ENCODE measurements at regions of chr5 and their contacts with region 1.

Region 1: GRCh38 chr5:96807075-96807654 is 580 bp downstream of the ERAP1 start:
- DNase-seq: peak; percentile 77
- H3K4me3 ChIP-seq: peak overlapping the region; percentile 92 to 93
- H3K27ac ChIP-seq: peak overlapping the region; percentile 99
- H3K4me1 ChIP-seq: peaks cover 8% of the 10 kb centered on the region
- H3K27me3 ChIP-seq: no peaks in the 10 kb centered on the region
- CTCF ChIP-seq: no peak
- POLR2A ChIP-seq: no peak

Region 2: GRCh38 chr5:96687812-96688453 is 119.2 kb before region 1 on chr5:
- intact Hi-C with region 1: no loop called
- DNase-seq: no peak
- H3K4me3 ChIP-seq: no peak overlapping the region
- H3K27ac ChIP-seq: no peak overlapping the region
- H3K4me1 ChIP-seq: no peaks in the 10 kb centered on the region
- H3K27me3 ChIP-seq: no peaks in the 10 kb centered on the region
- CTCF ChIP-seq: peak; percentile 33 to 56 (median 46)
- POLR2A ChIP-seq: no peak

Region 3: GRCh38 chr5:98773464-98774191 is 1966.5 kb after region 1 on chr5 and contains the start of gene RGMB:
- intact Hi-C with region 1: loop called (anchors 5 kb)
- DNase-seq: peak; percentile 99
- H3K4me3 ChIP-seq: peak within 1 kb of the TSS; percentile 73 to 86
- H3K27ac ChIP-seq: peak within 1 kb of the TSS; percentile 87 to 95
- H3K4me1 ChIP-seq: peaks cover 5% of the 10 kb centered on the region
- H3K27me3 ChIP-seq: no peaks in the 10 kb centered on the region
- CTCF ChIP-seq: peak in 1 of 3 experiments; percentile 3
- POLR2A ChIP-seq: peak; percentile 88
- total RNA-seq, gene RGMB: 41.2 to 47.4 TPM

Measured in testis (tissue), 5 donors.